Panc1 (cell line): ENCODE measurements at regions of chr1 and their contacts with region 1.

Region 1: GRCh38 chr1:100459358-100460114 is 78.4 kb upstream of the GPR88 start:
- DNase-seq: peak; percentile 53
- ATAC-seq: peak; percentile 95
- H3K4me3 ChIP-seq: no peak overlapping the region
- H3K27ac ChIP-seq: no peak overlapping the region
- H3K4me1 ChIP-seq: no peaks in the 10 kb centered on the region; the same call in 1 of the 2 replicates
- H3K27me3 ChIP-seq: no peaks in the 10 kb centered on the region
- CTCF ChIP-seq: peak; percentile 83

Region 2: GRCh38 chr1:99808391-99809115 is 651.0 kb before region 1 on chr1:
- CTCF ChIA-PET with region 1: no interaction called
- POLR2A ChIA-PET with region 1: no interaction called
- in situ Hi-C with region 1: no loop called
- intact Hi-C with region 1: loop called (anchors 10 kb)
- DNase-seq: peak; percentile 32
- ATAC-seq: peak; percentile 89
- H3K4me3 ChIP-seq: no peak overlapping the region; a peak in 1 of 4 replicates
- H3K27ac ChIP-seq: no peak overlapping the region
- H3K4me1 ChIP-seq: peaks cover 3% of the 10 kb centered on the region; the same call in 1 of the 2 replicates
- H3K27me3 ChIP-seq: no peaks in the 10 kb centered on the region; the same call in 1 of the 2 replicates
- CTCF ChIP-seq: peak; percentile 52

Region 3: DNA sequence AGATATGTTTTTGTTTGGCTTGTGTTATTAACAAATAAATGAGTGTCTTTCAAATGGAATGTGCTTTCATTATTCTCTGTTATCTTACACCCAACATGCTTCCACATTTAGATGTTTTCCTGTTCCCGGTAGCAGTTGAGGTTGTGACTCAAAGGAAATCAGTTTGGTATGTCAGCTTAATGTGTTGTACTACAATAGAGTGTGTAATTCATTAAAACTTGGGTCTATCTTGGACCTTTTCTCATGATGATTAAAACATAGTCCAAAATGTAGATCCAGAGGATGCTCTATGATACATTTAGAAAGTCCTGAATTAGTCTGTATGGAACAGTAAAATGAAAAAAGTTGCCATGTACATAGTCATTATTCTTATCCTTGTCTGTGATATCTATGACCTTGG is 166.8 kb before region 1 on chr1:
- CTCF ChIA-PET with region 1: no interaction called
- POLR2A ChIA-PET with region 1: no interaction called
- in situ Hi-C with region 1: no loop called
- intact Hi-C with region 1: loop called (anchors 5 kb)
- DNase-seq: no peak
- ATAC-seq: no peak
- H3K4me3 ChIP-seq: no peak overlapping the region
- H3K27ac ChIP-seq: no peak overlapping the region
- H3K4me1 ChIP-seq: no peaks in the 10 kb centered on the region
- H3K27me3 ChIP-seq: no peaks in the 10 kb centered on the region
- CTCF ChIP-seq: no peak

Region 4: DNA sequence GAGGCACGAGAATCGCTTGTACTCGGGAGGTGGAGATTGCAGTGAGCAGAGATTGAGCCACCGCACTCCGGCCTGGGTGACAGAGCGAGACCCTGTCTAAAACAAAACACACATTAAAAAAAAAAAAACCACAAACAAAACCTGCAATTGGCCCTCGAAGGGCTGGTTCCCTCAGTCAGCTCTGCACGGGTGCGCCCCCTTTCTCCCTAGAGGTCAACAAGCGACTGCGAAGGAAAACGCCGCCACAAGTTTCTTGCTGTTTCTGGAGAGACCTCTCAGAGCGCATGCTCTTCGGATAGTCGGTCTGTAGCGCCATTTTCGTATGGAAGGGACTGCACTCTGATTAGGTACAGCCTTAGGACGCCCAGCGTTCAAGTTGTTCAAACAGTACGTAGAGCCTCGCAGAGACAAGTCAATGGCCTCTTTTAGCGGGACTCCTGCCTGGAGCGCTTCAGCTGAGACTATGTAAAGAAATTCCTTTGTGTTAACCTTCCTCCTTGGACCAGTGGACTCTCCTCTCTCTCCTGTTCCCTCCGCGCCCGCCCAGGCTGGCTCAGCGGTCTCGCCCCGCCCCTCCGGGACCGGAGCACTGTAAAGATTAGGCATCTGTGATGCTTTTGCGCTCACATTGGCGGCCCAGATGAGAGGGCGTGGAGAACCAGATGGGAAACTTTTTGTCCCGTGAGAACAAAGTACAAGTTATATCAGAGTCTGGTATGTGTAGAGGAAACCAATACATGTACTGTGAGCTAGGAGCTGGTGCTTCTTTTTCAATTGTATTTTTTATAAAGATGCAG is 108.2 kb before region 1 on chr1:
- CTCF ChIA-PET with region 1: no interaction called
- POLR2A ChIA-PET with region 1: no interaction called
- in situ Hi-C with region 1: no loop called
- intact Hi-C with region 1: loop called (anchors 10 kb)
- DNase-seq: peak; percentile 80
- ATAC-seq: peak; percentile 90
- H3K4me3 ChIP-seq: peak overlapping the region; percentile 83 to 84
- H3K27ac ChIP-seq: peak overlapping the region; percentile 91
- H3K4me1 ChIP-seq: peaks cover 18% of the 10 kb centered on the region
- H3K27me3 ChIP-seq: no peaks in the 10 kb centered on the region
- CTCF ChIP-seq: peak; percentile 49

Region 5: DNA sequence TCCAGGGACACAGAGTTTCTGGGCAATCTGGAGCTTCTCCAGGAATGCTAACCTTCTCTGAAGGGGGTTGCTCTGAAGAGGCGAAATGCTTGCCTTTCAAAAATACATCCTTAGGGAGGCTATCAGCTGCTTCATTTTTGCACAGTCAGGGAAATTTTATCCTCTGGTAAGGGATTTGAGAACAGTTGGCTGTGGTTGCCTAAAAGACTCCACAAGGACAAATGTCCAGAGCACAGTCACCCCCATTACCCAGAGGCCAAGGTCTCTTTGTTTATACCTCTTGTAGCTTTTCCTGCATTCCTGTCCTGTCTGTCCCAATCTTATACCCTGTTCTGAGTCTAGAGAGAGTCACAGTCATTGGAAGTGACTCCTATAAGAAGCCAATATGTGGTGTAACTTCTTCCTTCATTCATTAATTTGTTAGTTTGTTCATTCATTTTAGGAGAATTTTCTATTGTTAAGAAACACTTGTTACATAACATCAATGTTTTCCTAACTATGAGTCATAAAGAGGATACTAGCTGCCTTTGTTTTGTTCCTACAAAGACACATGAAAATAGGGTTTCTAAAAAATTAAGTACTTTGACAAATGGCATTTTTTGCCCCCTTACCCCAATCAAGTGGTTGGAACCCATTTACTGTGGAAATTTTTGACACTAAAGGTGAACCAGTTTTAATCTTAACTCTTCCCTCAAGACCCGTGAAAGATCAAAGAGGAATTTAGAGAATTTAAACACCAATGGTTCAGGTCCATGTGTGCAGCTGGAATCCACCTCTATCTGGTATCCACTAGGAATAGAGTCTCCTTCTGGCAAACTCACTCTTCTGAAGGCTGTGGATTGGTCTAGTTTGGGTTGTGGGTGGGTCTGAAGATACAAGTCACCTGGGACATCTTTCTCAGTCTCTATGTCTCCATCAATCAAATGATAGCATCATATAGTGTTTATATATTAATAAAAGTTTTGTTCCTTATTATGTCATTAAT is 125.5 kb after region 1 on chr1:
- CTCF ChIA-PET with region 1: no interaction called
- POLR2A ChIA-PET with region 1: no interaction called
- in situ Hi-C with region 1: no loop called
- intact Hi-C with region 1: no loop called
- DNase-seq: no peak
- ATAC-seq: no peak
- H3K4me3 ChIP-seq: no peak overlapping the region
- H3K27ac ChIP-seq: no peak overlapping the region
- H3K4me1 ChIP-seq: no peaks in the 10 kb centered on the region
- H3K27me3 ChIP-seq: no peaks in the 10 kb centered on the region
- CTCF ChIP-seq: no peak